ENCODE measurements at regions of chr10 and their contacts with region 1.

Region 1: DNA sequence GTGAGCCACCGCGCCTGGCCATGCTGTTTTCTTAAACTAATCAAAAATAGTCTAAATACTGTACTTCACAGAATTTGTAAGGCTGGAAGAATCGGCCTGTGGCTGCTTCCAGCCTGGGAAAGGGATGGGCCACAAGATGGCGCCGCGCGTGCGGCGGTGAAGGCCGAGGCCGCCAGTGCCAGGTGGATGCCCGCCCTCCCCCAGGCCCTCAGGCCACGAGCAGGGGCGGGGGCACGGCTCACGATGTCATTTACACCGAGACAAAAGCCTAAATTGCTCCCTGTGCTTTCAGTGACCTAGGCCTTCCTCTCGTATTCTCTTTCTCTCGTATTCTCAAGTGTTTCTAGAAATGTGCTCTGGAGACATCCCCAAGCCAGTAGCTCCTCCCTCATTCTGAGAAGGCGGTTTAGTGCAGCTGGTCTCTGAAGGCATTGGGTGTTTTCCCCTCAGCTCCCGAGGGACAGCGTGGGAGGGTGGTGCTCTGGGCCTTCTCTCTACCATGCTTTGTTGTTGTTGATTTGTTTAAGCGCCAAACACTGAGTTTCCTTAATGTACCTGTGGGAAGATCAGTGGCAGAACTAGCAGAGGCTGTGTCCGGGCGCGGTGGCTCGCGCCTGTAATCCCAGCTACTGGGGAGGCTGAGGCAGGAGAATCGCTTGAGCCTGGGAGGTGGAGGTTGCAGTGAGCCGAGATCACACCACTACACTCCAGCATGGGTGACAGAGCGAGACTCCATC is 68.4 kb downstream of the CDC123 start:
- DNase-seq: peak; percentile 87 to 93
- ATAC-seq: peak; percentile 94
- H3K4me3 ChIP-seq: no peak overlapping the region
- H3K27ac ChIP-seq: no peak overlapping the region
- H3K4me1 ChIP-seq: peaks cover 0 to 1% of the 10 kb centered on the region in 2 donors
- H3K27me3 ChIP-seq: no peaks in the 10 kb centered on the region

Region 2: GRCh38 chr10:12333380-12334185 is 69.2 kb after region 1 on chr10:
- intact Hi-C with region 1: loop called in 1 of 2 experiments (anchors 5 kb)
- DNase-seq: peak; percentile 90 to 91
- ATAC-seq: peak; percentile 91
- H3K4me3 ChIP-seq: no peak overlapping the region
- H3K27ac ChIP-seq: peak overlapping the region; percentile 97 to 99
- H3K4me1 ChIP-seq: peaks cover 0 to 6% of the 10 kb centered on the region in 2 donors
- H3K27me3 ChIP-seq: no peaks in the 10 kb centered on the region

Region 3: GRCh38 chr10:12656518-12657142 is 392.3 kb after region 1 on chr10:
- intact Hi-C with region 1: loop called (anchors 2 to 10 kb)
- DNase-seq: no peak
- ATAC-seq: peak; percentile 75
- H3K4me3 ChIP-seq: no peak overlapping the region
- H3K27ac ChIP-seq: no peak overlapping the region
- H3K4me1 ChIP-seq: no peaks in the 10 kb centered on the region
- H3K27me3 ChIP-seq: no peaks in the 10 kb centered on the region

Region 4: GRCh38 chr10:13074561-13075451 is 810.4 kb after region 1 on chr10:
- intact Hi-C with region 1: loop called (anchors 5 to 10 kb)
- DNase-seq: peak; percentile 76 to 90
- ATAC-seq: peak; percentile 76
- H3K4me3 ChIP-seq: no peak overlapping the region
- H3K27ac ChIP-seq: no peak overlapping the region
- H3K4me1 ChIP-seq: no peaks in the 10 kb centered on the region
- H3K27me3 ChIP-seq: no peaks in the 10 kb centered on the region